ENCODE measurements at regions of chr5 and their contacts with region 1.

Region 1: DNA sequence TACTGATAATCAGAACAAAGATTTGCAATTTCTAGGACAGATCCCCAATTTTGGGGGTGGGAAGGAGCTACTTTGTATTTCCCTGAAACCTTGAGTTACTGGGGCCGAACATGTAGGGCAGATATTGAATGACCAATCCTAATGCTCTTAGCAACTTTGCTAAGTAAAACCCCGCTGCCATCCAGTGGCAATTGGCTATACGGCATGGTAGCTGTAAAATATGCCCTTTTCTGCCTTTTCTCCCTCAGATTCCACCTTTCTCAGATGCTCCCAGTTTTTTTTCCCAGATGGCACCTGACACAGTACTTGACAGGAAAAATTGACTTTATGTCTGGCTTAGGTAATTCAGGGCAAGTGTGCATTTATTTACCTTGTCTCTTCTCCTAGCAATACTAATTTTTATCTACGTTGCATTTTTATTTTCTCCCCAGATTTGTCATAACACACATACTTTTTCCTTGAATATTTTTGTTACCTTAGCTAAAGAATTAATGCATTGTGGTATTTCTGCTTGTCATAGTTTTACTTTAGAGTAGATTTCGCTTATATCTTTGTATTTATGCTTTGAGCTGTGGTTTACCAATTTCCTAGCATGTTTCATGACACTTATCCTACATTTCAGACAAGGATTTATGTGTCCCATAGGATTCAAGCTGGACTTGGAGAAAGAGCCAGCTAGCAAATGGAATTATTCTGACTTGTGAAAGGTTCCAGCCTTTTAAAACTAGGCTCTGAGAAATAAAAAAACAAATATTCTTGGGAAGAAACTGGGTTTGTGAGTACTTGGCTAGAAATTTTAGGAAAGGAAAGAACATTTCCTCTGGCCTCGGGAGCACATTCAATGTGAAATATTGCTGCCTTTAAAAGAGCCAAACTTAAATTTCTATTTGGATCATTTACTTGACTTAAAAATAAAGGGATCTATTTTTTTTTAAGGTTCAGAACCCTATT is 37.4 kb downstream of the PIK3R1 start:
- DNase-seq: peak; percentile 66
- H3K4me3 Mint-ChIP-seq: peak overlapping the region; percentile 61
- H3K27ac Mint-ChIP-seq: peak overlapping the region; percentile 47
- H3K4me1 Mint-ChIP-seq: peaks cover 84% of the 10 kb centered on the region
- H3K27me3 Mint-ChIP-seq: no peaks in the 10 kb centered on the region
- CTCF ChIP-seq: peak; percentile 73

Region 2: DNA sequence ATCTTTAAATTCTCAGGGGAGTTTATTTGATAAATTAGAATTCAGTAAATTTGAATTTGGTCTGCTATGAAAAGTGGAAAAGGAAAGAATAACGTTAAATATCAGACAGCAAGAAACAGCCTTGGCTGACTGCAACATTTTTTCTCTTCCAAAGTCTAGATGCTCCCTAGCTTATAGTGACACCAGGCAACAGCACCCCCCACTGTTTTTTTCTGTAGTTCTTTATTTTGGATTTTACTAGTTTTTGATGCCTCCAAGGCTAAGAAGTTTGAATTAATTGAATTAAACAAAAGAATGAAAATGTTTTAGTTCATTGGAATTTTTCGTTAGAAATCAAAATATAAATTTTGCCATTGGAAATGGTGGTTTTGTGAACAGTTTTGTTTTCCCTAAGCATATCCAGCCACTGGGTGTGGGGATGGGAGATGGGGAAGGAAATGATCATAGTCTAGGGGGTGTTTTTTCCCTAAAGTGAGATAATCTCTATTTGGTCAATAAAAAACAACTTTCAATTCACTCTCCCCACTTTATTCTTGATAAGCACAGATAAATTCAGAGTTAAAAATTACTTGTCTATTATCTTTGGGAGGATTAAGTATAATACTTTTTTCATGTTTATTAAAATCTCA is 857.0 kb before region 1 on chr5:
- CTCF ChIA-PET with region 1: no interaction called
- POLR2A ChIA-PET with region 1: no interaction called
- intact Hi-C with region 1: loop called (anchors 2 kb)
- DNase-seq: peak; percentile 17
- H3K4me3 Mint-ChIP-seq: no peak overlapping the region
- H3K27ac Mint-ChIP-seq: peak overlapping the region; percentile 77
- H3K4me1 Mint-ChIP-seq: peaks cover 30% of the 10 kb centered on the region
- H3K27me3 Mint-ChIP-seq: no peaks in the 10 kb centered on the region
- CTCF ChIP-seq: peak; percentile 8

Region 3: GRCh38 chr5:67896311-67896929 is 356.5 kb before region 1 on chr5:
- CTCF ChIA-PET with region 1: interaction called, 3 read pairs
- POLR2A ChIA-PET with region 1: interaction called, 23 read pairs
- intact Hi-C with region 1: no loop called
- DNase-seq: peak; percentile 27
- H3K4me3 Mint-ChIP-seq: no peak overlapping the region
- H3K27ac Mint-ChIP-seq: peak overlapping the region; percentile 82
- H3K4me1 Mint-ChIP-seq: peaks cover 39% of the 10 kb centered on the region
- H3K27me3 Mint-ChIP-seq: no peaks in the 10 kb centered on the region
- CTCF ChIP-seq: no peak

Region 4: GRCh38 chr5:68239487-68239886 is 13.5 kb before region 1 on chr5:
- CTCF ChIA-PET with region 1: interaction called, 5 read pairs
- POLR2A ChIA-PET with region 1: interaction called, 29 read pairs
- intact Hi-C with region 1: no loop called
- DNase-seq: peak; percentile 65
- H3K4me3 Mint-ChIP-seq: peak overlapping the region; percentile 60
- H3K27ac Mint-ChIP-seq: peak overlapping the region; percentile 89
- H3K4me1 Mint-ChIP-seq: peaks cover 53% of the 10 kb centered on the region
- H3K27me3 Mint-ChIP-seq: no peaks in the 10 kb centered on the region
- CTCF ChIP-seq: no peak